ENCODE measurements at regions of chr16 and their contacts with region 1.

Region 1: DNA sequence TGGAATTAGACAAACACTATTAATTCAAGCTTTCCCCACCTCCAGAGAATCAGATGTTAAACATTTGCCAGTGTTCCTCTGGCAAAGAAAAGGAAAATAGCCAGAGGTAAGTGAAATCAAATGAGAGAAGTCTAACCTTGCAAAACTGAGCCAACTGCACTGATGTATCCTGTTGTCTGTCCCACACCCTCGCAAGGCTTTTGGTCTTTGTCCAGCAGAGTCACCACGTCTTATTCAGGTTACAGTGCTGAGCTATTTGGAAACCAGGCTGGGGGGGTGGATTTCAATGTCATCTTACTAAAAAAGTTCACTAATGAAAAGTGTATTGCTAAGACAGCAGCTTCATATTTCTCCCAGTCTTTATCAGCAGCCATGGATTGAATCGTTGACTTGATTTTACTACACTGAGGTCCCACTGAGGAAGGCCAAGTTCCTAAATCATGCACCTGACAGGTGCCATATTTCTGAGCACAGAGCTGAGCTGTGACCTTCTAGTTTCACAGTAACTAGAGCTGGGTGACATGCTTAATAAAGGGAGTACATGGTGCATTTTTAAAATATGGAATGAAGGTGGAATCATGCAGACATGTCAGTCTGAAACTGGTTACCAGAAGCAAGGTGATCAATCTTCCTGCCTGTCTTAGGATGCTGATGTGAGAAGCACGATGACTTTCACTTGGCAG is 85.1 kb upstream of the HSBP1 start:
- DNase-seq: no peak
- H3K4me3 ChIP-seq: no peak overlapping the region
- H3K27ac ChIP-seq: no peak overlapping the region
- H3K4me1 ChIP-seq: no peaks in the 10 kb centered on the region
- H3K27me3 ChIP-seq: no peaks in the 10 kb centered on the region
- CTCF ChIP-seq: no peak

Region 2: DNA sequence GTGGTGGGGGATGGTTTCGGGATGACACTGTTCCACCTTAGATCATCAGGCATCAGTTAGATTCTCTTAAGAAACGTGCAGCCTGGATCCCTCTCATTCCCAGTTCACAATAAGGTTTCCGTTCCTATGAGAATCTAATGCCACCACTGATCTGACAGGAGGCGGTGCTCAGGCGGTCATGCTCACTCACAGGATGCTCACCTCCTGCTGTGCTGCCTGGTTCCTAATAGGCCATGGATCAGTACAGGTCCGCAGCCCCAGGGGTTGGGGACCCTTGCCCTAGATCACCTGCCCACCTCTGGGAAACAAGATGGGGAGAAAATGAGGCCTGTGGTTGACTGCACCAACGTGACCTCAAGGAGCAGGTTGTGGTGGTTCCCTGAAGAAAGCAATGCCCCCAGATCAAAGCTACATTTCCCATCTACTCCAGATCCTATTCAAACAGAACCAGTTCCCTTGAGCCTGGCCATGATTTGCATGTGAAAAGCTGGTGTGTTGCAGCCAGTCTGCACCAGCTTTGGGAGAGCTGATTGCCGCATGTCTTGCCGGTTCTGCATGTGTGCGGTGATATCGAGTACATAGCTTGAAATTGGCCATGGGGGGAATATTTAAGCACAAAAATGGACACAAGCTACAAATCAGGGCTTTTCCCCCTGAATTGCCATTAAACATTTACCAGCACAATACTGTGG is 98.1 kb before region 1 on chr16:
- CTCF ChIA-PET with region 1: no interaction called
- dilution Hi-C with region 1: loop called (anchors 5 kb)
- in situ Hi-C with region 1: no loop called
- intact Hi-C with region 1: no loop called
- DNase-seq: no peak
- H3K4me3 ChIP-seq: no peak overlapping the region
- H3K27ac ChIP-seq: no peak overlapping the region
- H3K4me1 ChIP-seq: no peaks in the 10 kb centered on the region
- H3K27me3 ChIP-seq: no peaks in the 10 kb centered on the region
- CTCF ChIP-seq: no peak

Region 3: GRCh38 chr16:83771306-83771942 is 48.8 kb after region 1 on chr16:
- CTCF ChIA-PET with region 1: no interaction called
- dilution Hi-C with region 1: loop called (anchors 5 kb)
- in situ Hi-C with region 1: no loop called
- intact Hi-C with region 1: no loop called
- DNase-seq: no peak
- H3K4me3 ChIP-seq: no peak overlapping the region
- H3K27ac ChIP-seq: no peak overlapping the region
- H3K4me1 ChIP-seq: no peaks in the 10 kb centered on the region
- H3K27me3 ChIP-seq: no peaks in the 10 kb centered on the region
- CTCF ChIP-seq: no peak